Activated B cell treated with CpG ODN at 0.5 μM for 24 hours (primary cell): ENCODE measurements at regions of chr3 and their contacts with region 1.

Region 1: DNA sequence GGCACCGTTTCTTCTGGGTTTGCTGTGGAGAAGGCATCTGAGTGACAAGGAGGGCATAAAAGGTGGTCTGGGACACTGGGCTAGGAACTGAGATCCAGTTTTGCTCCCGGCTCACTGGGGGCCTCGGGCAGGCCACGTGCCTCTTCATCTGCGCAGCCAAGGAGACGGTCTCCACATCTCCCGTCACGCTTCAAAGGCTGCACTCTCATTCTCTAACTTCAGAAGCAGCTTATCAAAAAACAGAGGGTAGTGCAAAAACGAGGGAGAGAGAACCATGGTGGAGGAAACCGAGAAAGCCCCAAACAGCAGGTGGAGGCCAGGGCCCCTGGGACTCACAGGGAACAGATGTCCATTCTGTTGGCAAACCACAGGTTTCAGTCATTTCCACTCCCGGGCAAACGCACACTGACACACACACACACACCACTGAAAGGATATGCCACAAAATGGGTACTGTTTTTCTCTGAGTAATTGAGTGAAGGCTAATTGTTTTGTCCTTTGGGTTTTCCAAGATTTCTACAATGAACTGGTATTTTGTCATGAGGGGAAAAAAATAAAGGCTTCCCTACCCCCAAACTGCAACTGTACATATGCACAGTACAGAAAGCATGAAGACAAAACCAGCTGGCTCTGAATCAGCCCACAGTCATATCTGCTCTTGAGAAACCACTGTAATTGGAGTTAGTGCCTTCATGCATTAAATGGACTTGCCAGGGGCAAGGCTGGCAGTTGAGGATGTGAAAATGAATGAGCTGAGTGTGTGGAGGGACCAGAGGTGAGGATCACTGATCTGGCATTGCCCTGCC is 71.9 kb downstream of the MGLL start:
- DNase-seq: peak; percentile 36
- ATAC-seq: peak; percentile 50
- H3K4me3 Mint-ChIP-seq: peak overlapping the region; percentile 69
- H3K27ac Mint-ChIP-seq: peak overlapping the region; percentile 88
- H3K4me1 Mint-ChIP-seq: peaks cover 57% of the 10 kb centered on the region
- H3K27me3 Mint-ChIP-seq: no peaks in the 10 kb centered on the region
- CTCF ChIP-seq: no peak

Region 2: DNA sequence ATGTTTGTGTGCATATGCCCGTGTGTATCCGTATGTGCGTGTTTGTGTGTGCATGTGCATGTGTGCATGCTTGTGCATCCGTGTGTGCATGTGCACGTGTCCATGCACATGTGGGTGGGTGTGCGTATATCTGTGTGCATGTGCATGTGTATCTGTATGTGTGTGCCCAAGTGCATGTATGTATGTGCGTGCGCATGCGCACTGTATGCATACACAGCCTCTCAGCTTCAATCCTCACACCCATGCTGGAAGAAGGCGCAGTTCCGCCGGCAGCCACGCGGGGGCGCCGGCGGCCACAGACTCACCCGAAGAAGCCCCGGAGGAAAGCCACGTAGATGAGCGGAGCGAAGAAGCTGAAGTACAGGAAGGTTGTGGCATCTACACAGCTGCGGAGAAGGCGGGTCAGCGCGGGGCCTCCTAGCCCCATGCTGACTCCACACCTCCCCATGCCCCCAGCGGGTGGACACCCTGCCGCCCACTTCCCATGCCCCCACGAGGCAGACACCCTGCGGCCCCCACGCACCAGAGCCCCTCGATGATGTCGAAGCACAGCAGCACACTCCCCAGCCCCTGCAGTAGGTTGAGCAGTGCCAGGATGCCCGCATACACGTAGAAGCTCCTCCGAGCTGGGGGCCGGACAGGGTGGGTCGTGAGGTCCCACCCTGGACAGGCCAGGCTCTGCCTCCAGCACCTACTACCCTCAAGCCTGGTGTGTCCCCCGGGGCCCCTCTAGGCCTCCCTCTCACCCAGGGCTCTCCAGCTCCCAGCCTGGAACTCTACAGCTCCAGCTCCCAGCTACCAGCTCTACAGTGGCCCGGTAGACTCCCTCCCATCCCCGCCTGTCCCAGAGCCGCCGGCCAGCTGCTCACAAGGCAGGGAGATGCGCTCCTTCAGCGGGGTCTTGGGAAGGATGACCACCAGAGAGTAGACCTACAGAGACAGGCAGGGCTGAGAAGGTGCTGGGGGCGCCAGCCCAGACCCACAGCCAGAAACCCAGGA is 175.2 kb before region 1 on chr3:
- CTCF ChIA-PET with region 1: interaction called, 7 read pairs
- POLR2A ChIA-PET with region 1: no interaction called
- intact Hi-C with region 1: loop called (anchors 5 kb)
- DNase-seq: peak; percentile 83
- ATAC-seq: peak; percentile 99
- H3K4me3 Mint-ChIP-seq: no peak overlapping the region
- H3K27ac Mint-ChIP-seq: peak overlapping the region; percentile 36
- H3K4me1 Mint-ChIP-seq: peaks cover 9% of the 10 kb centered on the region
- H3K27me3 Mint-ChIP-seq: no peaks in the 10 kb centered on the region
- CTCF ChIP-seq: no peak

Region 3: DNA sequence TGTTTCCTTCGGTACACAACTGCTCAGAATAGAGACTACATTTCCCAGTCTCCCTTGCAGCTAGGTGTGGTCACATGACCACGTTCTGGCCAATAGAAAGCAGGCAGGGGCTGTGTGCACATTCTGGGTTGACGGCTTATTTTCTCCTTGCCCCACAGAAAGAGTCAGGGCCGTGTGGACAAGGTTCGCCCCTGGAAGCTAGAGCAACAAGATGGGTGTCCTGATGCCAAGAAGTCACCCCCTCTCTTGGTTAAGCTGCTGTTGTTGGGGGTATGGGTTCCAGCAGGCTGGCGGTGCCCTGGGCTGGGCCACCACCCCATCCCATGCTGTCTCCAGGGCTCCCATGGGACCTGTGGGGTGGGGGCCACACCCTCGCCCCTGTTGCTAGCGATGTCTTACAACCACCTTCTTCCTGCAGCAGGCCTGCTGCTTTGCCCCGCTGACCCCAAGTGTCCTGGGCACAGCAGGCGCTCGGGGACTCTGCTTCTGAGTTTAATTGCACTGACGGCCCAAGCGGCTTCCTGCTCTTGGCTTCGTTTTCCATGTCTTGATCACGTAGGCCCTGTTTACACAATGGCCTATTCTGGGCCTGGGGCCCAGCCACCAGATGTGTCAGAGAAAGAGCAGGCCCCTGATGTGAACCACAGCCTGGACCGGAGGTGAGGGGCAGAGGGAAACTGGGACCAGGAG is 52.7 kb before region 1 on chr3:
- CTCF ChIA-PET with region 1: interaction called, 3 read pairs
- POLR2A ChIA-PET with region 1: interaction called, 10 read pairs
- intact Hi-C with region 1: loop called (anchors 2 kb)
- DNase-seq: peak; percentile 42
- ATAC-seq: peak; percentile 83
- H3K4me3 Mint-ChIP-seq: peak overlapping the region; percentile 70
- H3K27ac Mint-ChIP-seq: peak overlapping the region; percentile 57
- H3K4me1 Mint-ChIP-seq: peaks cover 24% of the 10 kb centered on the region
- H3K27me3 Mint-ChIP-seq: peaks cover 2% of the 10 kb centered on the region
- CTCF ChIP-seq: no peak

Region 4: DNA sequence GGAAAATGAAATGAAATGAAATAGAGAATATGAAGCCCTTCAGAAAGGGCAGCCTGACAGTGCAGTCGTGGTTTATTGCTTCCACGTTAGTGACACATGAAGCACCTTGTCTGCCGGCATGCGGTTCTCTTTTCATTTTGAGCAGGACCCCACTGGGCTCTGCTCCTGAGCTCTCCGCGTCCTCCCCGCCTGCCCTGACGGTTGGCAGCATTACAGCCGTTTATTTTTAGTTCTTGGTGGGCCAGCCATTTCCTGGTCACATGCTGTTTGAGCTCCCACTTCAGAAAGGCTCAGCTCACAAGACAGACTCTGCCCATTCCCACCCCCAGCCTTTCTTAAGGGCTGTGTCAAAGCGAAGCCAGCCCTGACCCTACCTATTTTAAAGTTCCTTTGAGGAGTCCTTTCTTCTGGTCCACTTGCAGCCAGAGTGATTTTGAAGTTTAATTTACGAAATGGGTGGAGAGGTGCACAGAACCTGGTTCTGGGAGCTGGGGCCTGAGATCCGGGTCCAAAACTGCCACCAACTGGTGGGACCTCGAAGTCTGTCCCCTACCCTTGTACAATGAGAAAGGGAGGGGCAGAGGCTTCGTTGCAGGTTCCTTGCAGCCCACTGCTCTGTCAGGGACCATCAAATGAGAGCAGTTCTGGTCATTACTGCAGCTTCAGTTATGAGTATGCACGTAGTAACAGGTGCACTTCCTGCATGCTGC is 11.8 kb after region 1 on chr3:
- CTCF ChIA-PET with region 1: interaction called, 3 read pairs
- POLR2A ChIA-PET with region 1: interaction called, 5 read pairs
- intact Hi-C with region 1: loop called (anchors 1 kb)
- DNase-seq: no peak
- ATAC-seq: peak; percentile 67
- H3K4me3 Mint-ChIP-seq: peak overlapping the region; percentile 74
- H3K27ac Mint-ChIP-seq: peak overlapping the region; percentile 76
- H3K4me1 Mint-ChIP-seq: peaks cover 47% of the 10 kb centered on the region
- H3K27me3 Mint-ChIP-seq: no peaks in the 10 kb centered on the region
- CTCF ChIP-seq: no peak

Region 5: GRCh38 chr3:127822698-127823425 is 72.4 kb after region 1 on chr3:
- CTCF ChIA-PET with region 1: interaction called, 3 read pairs
- POLR2A ChIA-PET with region 1: interaction called, 26 read pairs
- intact Hi-C with region 1: loop called (anchors 2 kb)
- DNase-seq: peak; percentile 39
- ATAC-seq: peak; percentile 72
- H3K4me3 Mint-ChIP-seq: peak overlapping the region; percentile 93
- H3K27ac Mint-ChIP-seq: peak overlapping the region; percentile 74
- H3K4me1 Mint-ChIP-seq: peaks cover 29% of the 10 kb centered on the region
- H3K27me3 Mint-ChIP-seq: peaks cover 14% of the 10 kb centered on the region
- CTCF ChIP-seq: no peak

Region 6: DNA sequence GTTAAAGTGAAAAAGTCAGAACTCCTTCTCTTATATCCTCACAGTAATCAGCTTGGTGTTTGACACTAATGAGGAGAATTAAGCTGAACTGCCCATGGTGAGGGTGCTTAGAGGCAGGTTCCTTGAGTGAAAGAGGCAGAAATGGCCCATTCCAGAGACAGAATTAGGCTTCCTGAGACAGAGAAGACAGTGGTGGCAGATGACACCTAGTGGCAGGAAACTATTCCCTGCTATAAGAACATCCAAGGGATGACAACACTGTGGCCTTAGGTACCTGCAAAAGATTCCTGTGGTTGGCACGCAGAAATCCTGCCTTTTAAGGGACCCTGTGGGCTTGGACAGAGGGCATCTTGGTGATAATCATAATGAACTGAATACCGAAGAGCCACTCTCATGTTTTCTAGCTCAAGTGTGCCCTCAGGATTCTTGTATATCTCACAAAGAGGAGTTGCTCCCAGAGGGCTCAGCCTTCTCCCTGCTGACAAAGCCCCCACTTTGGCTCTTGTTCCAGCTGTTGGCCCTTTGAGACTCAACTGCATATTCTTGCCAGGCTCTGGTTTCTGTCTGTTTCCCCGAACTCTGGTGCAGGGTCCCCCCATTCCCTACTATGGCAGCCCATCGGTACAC is 220.7 kb after region 1 on chr3:
- CTCF ChIA-PET with region 1: no interaction called
- POLR2A ChIA-PET with region 1: no interaction called
- intact Hi-C with region 1: loop called (anchors 1 kb)
- DNase-seq: no peak
- ATAC-seq: peak; percentile 67
- H3K4me3 Mint-ChIP-seq: no peak overlapping the region
- H3K27ac Mint-ChIP-seq: no peak overlapping the region
- H3K4me1 Mint-ChIP-seq: no peaks in the 10 kb centered on the region
- H3K27me3 Mint-ChIP-seq: peaks cover 5% of the 10 kb centered on the region
- CTCF ChIP-seq: peak; percentile 30